Dendritic cell treated with granulocyte-macrophage colony-stimulating factor and Interleukin-4, amounts not matched to agents 40 ng/mL and 50 ng/mL, for 4 days (primary cell): ENCODE measurements at regions of chr19 and their contacts with region 1.

Region 1: GRCh38 chr19:47152224-47153017 is 21.8 kb downstream of the SAE1 start:
- H3K4me3 Mint-ChIP-seq: no peak overlapping the region
- H3K27ac Mint-ChIP-seq: no peak overlapping the region
- H3K4me1 Mint-ChIP-seq: peaks cover 11% of the 10 kb centered on the region
- H3K27me3 Mint-ChIP-seq: no peaks in the 10 kb centered on the region

Region 2: DNA sequence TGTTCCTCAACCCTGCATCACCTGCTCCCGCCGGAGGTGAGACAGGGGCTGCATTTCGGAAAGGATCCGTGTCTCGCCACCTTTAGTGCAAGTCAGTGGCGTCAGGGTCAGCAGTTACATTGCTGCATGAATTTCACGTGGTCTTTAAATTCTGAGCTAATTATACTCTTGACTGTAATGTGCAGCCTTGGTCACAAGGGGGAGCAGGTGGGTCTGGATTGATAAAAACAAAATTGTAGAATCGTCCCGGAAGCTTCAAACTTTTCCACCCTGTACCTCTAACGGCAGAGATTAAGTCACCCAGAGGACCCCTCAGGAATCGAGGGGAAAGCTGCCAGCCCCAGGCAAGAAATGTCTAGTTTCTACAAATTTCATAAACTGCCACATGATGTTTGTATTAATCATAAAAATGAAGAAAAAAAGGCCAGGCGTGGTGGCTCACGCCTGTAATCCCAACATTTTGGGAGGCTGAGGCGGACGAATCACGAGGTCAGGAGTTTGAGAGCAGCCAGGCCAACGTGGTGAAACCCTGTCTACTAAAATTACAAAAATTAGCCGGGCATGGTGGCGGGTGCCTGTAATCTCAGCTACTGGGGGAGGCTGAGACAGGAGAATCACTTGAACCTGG is 58.4 kb after region 1 on chr19:
- intact Hi-C with region 1: loop called (anchors 2 kb)
- H3K4me3 Mint-ChIP-seq: no peak overlapping the region
- H3K27ac Mint-ChIP-seq: peak overlapping the region; percentile 62
- H3K4me1 Mint-ChIP-seq: peaks cover 10% of the 10 kb centered on the region
- H3K27me3 Mint-ChIP-seq: no peaks in the 10 kb centered on the region